ENCODE measurements at regions of chr2 and their contacts with region 1.

Region 1: DNA sequence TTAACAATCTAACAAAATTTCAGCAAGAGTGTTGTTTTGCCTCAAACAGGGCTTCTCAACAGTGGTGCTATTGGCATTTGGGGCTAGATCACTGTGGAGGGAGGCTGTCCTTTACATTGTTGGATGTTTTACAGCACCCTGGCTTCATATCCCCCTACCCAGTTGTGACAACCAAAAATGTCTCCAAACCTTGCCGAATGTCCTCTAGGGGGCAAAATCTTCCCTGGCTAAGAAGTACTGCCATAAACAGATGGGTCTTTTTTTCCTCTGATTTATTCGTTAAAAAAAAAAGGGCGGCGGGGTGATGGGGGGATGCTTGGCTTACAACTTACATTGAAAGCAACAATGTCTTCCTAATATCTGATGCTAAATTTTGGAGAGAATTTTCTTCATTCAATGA is 207.6 kb upstream of the CCDC150 start:
- DNase-seq: no peak
- ATAC-seq: no peak

Region 2: GRCh38 chr2:196372811-196373664 is 58.9 kb before region 1 on chr2:
- intact Hi-C with region 1: loop called (anchors 5 kb)
- DNase-seq: no peak
- ATAC-seq: peak; percentile 59

Region 3: DNA sequence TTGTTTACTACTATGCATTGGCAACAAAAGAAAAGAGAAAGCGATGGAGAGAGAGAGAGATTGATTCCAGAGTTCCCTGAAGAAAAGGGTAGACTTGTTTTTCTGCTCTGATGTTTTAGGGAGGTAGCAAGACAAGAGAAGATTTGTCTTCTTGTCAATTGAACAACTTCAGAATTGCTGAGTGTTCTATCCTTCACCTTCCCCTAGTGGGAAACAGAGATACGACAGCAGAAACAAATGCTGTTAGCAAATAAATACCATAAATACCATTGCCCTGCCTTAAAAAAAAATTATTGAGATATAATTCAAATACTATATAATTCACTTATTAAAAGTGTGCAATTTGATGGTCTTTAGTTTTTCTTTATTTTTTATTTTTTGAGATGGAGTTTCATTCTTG is 181.3 kb after region 1 on chr2:
- intact Hi-C with region 1: no loop called
- DNase-seq: no peak
- ATAC-seq: no peak

Region 4: DNA sequence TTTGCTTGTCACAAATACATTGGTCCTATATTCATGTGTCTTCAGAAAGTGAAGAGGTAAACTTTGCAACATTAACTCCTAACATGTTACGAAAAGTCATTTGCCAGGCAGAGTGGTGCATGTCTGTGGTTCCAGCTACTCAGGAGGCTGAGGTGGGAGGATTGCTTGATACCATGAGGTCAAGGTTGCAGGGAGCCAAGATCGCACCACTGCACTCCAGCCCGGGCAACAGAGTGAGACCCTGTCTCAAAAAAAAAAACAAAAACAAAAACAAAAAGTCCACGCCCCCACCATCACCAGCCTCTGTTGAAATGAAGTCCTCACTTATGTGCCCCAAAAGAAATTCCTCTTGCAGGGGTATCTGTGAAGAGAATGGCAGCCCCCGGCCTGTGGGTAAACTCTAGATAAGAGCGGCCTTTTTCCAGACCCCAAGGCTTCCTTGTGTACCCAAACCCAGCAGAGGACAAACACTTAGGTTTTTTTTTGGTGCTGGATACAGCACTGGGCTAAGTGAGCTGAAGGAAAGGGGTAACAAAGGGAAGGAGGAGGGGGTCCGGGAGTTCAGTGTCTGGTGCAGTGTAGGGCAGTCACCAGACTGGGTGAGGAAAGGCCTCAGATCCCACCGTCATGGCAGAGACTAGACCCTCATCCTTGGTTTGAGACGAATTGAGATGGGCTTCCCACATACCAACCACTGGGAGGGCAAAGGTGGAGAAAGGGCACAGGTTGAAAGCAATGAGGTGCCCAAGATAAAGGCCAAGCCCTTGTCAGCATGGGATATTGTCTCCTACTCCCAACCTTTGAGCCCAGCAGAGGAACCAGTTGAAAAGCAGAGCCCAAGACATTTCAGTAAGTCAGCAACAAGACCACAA is 1048.4 kb after region 1 on chr2:
- intact Hi-C with region 1: no loop called
- DNase-seq: no peak
- ATAC-seq: no peak

Measured in Right ventricle myocardium inferior (tissue), 1 donor.